ENCODE measurements at regions of chr3 and their contacts with region 1.

Region 1: DNA sequence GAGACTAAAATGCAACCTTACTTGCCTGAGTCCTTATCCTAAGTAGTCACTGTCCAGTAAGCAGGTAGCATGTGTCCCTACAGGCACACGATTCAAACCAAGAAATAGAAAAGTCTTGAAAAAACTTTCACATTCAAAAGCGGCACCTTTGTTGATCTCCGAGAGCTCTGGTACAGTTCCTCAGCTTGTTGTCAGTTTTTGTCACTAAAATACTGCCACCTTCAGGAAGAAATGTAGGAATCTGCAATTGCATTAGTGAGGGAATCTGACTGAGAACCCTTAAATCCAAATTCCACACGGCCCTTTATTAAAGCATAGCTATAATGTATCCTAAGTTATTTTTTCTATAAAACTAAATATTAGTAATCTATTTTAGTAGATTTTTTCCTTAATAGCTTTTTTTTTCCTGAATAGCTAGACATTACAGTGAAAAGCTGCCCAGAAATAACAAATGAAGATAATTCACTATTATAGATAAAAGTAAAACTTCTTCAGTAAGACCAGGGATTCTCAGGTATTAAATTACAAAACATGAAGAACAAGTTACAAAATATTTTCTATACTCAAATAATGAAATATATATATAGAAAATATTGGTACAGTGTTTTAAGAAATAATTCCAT is 44.0 kb downstream of the CCDC54 start:
- DNase-seq: peak; percentile 28
- H3K4me3 Mint-ChIP-seq: peak overlapping the region; percentile 59
- H3K27ac Mint-ChIP-seq: peak overlapping the region; percentile 17
- H3K4me1 Mint-ChIP-seq: peaks cover 20% of the 10 kb centered on the region
- H3K27me3 Mint-ChIP-seq: no peaks in the 10 kb centered on the region
- CTCF ChIP-seq: peak; percentile 29

Region 2: DNA sequence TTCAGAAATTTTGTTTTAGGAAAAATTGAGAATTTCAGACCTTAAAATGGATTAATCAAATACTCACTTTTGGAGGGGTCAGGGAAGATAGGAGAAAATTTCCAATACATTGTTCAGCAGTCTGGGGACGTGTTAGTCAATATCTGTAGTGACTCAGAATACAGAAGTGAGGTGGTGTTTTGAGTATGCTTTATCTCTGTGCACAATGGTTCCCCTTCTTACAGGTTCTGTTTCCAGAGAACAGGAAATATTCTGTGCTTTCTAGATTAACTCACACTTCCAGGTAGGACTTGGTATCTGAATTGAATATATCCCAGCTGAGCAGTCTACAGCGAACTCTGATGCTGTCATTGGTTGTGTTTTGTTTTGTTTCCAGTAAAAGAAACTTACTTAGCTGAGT is 74.7 kb before region 1 on chr3:
- CTCF ChIA-PET with region 1: no interaction called
- intact Hi-C with region 1: loop called (anchors 5 kb)
- DNase-seq: no peak
- H3K4me3 Mint-ChIP-seq: no peak overlapping the region
- H3K27ac Mint-ChIP-seq: peak overlapping the region; percentile 28
- H3K4me1 Mint-ChIP-seq: peaks cover 48% of the 10 kb centered on the region
- H3K27me3 Mint-ChIP-seq: no peaks in the 10 kb centered on the region
- CTCF ChIP-seq: no peak

Region 3: DNA sequence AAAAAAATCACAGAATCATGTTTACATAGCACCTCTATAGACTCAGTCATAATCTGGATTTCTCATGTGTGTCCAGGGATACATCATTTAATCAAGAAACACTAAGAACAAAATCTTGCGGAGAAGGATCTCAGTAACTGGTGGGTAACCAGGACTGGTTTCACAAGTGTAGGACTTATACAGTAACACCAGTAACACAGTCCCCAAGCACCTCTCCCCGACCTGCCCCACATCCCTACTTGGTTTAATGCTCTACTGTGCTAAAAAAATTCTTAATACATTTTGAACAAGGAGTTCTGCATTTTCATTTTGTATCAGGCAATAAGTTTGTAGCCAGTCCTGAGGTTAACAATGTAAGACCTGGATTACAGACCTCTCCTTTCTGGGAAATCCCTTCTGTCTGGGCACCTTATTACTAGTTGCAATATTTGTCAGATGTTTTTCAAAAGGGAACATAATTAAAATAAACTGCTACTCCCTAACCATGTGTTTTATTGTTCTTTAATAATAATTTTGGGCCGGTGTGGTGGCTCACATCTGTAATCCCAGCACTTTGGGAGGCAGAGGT is 43.9 kb after region 1 on chr3:
- CTCF ChIA-PET with region 1: no interaction called
- intact Hi-C with region 1: no loop called
- DNase-seq: no peak
- H3K4me3 Mint-ChIP-seq: no peak overlapping the region
- H3K27ac Mint-ChIP-seq: no peak overlapping the region
- H3K4me1 Mint-ChIP-seq: peaks cover 14% of the 10 kb centered on the region
- H3K27me3 Mint-ChIP-seq: no peaks in the 10 kb centered on the region
- CTCF ChIP-seq: no peak

Region 4: DNA sequence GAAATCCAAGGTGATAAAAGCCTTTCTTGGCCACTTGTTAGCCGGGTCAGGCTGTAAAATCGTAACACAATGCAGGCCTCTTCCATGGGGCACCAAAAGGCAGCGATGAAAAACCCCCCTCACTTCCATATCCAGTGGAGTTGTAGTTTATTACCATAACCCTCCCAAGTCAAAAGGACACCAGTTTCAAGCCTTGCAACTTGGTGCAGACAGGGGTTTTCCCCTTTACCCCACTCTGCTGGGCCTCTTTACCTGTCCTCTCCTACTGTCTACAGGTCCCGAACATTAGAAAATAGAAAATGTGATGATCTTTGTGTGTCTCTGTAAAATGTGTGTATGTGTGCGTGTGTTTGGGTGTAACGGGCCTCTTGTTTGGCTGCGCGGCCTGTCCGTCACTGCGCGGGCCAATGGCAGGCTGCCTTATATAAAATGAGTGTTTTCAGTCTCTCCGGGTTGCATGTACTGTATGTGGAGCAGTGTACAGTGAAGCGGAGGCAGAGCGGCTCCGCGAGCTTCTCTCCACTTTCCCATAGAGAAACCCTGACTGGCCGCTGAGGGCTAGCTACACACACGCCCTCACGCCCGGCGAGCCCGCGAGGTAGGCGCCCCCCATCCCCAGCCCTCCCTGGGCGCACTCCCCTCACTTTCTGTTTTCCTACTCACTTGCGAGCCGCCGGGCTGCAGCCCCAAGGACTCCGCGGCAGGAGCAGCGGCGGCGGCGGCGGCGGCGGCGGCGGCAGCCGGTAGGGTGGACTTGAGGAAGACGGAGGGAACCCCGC is 101.4 kb after region 1 on chr3 and contains the start of gene BBX:
- CTCF ChIA-PET with region 1: no interaction called
- intact Hi-C with region 1: loop called (anchors 5 kb)
- DNase-seq: peak; percentile 90
- H3K4me3 Mint-ChIP-seq: peak within 1 kb of the TSS; percentile 98
- H3K27ac Mint-ChIP-seq: peak within 1 kb of the TSS; percentile 94
- H3K4me1 Mint-ChIP-seq: no peaks in the 10 kb centered on the region
- H3K27me3 Mint-ChIP-seq: no peaks in the 10 kb centered on the region
- CTCF ChIP-seq: no peak
- total RNA-seq, gene BBX: 66.9 and 72.2 TPM in 2 replicates